ENCODE measurements at regions of chr2 and their contacts with region 1.

Region 1: DNA sequence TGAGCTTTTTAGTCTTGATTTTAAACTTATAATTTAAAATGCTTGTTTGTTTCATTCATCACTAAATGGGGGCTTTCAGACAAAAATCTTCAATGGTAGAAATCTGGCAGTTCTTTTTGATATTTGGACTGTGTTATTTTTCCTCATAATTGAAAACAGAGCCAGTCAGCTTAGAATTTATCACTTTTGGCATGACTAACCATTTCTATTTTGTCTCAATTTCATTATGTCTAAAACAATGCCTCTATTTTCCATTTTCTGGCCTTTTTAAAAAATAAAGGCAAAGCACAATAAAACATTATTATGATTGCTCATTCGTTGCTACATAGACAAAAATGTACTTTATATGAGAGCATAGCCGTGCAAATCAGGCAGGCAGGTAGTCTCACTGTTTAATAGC is 434.5 kb downstream of the XIRP2 start:
- DNase-seq: no peak

Region 2: GRCh38 chr2:167423731-167424130 is 100.9 kb after region 1 on chr2:
- intact Hi-C with region 1: loop called in 1 of 2 experiments (anchors 2 kb)
- DNase-seq: no peak

Measured in posterior vena cava (tissue), 2 donors.